Activated B cell treated with CpG ODN at 0.5 μM for 24 hours (primary cell): ENCODE measurements at regions of chr17 and their contacts with region 1.

Region 1: GRCh38 chr17:50560185-50560824 is at the start of gene CACNA1G:
- DNase-seq: peak; percentile 86
- ATAC-seq: peak; percentile 90
- H3K4me3 Mint-ChIP-seq: peak within 1 kb of the TSS; percentile 84
- H3K27ac Mint-ChIP-seq: no peak within 1 kb of the TSS
- H3K4me1 Mint-ChIP-seq: peaks cover 29% of the 10 kb centered on the region
- H3K27me3 Mint-ChIP-seq: peaks cover 37% of the 10 kb centered on the region
- CTCF ChIP-seq: no peak
- total RNA-seq, gene CACNA1G: 0.07 TPM in 1 of 2 replicates, not detected in the other

Region 2: DNA sequence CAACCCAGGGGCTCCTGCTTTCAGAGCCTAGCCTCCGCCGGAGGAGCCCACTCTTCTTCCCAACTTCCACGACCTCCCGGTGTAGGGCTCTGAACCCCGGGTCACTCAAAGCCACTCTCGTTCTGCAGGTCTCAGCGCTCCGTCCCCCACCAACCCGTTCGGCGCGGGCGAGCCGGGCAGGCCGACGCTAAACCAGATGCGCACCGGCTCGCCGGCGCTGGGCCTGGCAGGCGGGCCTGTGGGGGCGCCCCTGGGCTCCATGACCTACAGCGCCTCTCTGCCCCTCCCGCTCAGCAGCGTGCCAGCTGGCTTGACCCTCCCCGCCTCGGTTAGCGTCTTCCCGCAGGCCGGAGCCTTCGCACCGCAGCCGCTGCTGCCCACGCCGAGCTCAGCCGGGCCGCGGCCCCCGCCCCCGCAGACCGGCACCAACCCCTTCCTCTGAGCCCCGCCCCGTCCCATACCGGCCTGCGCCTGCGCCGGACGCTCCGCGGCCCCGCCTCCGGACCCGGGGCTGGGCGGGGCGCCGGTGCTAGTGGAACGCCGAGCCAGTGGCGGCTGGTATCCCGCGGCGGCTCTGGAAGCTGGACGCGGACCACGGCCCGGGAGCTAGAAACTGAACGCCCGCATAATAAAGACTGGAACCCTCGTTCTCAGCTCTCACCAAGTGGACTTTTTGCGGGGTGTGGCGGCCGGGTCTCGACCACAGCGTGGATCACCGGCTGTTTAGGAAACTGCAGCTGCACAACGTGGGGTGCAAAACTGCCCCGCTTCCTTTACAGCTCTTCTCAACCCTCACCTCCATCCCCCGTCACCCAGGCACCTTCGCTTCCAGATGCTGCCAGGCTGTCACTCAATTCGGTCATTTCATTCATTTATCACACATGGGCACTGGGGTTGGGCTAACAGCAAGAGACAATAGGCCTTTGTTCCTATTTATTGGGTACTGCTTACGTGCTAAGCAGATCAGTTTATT is 18.3 kb before region 1 on chr17:
- CTCF ChIA-PET with region 1: interaction called, 6 read pairs
- POLR2A ChIA-PET with region 1: interaction called, 4 read pairs
- intact Hi-C with region 1: loop called (anchors 1 kb)
- DNase-seq: peak; percentile 92
- ATAC-seq: peak; percentile 86
- H3K4me3 Mint-ChIP-seq: peak overlapping the region; percentile 85
- H3K27ac Mint-ChIP-seq: peak overlapping the region; percentile 76
- H3K4me1 Mint-ChIP-seq: peaks cover 17% of the 10 kb centered on the region
- H3K27me3 Mint-ChIP-seq: peaks cover 7% of the 10 kb centered on the region
- CTCF ChIP-seq: no peak

Region 3: DNA sequence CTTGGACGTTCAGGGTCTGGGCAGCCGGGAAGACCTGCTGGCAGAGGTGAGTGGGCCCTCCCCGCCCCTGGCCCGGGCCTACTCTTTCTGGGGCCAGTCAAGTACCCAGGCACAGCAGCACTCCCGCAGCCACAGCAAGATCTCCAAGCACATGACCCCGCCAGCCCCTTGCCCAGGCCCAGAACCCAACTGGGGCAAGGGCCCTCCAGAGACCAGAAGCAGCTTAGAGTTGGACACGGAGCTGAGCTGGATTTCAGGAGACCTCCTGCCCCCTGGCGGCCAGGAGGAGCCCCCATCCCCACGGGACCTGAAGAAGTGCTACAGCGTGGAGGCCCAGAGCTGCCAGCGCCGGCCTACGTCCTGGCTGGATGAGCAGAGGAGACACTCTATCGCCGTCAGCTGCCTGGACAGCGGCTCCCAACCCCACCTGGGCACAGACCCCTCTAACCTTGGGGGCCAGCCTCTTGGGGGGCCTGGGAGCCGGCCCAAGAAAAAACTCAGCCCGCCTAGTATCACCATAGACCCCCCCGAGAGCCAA is 65.8 kb after region 1 on chr17:
- CTCF ChIA-PET with region 1: no interaction called
- POLR2A ChIA-PET with region 1: no interaction called
- intact Hi-C with region 1: loop called (anchors 5 kb)
- DNase-seq: peak; percentile 47
- ATAC-seq: peak; percentile 76
- H3K4me3 Mint-ChIP-seq: no peak overlapping the region
- H3K27ac Mint-ChIP-seq: no peak overlapping the region
- H3K4me1 Mint-ChIP-seq: no peaks in the 10 kb centered on the region
- H3K27me3 Mint-ChIP-seq: peaks cover 39% of the 10 kb centered on the region
- CTCF ChIP-seq: no peak

Region 4: GRCh38 chr17:50638851-50639767 is 78.8 kb after region 1 on chr17:
- CTCF ChIA-PET with region 1: no interaction called
- POLR2A ChIA-PET with region 1: no interaction called
- intact Hi-C with region 1: no loop called
- DNase-seq: no peak
- ATAC-seq: no peak
- H3K4me3 Mint-ChIP-seq: no peak overlapping the region
- H3K27ac Mint-ChIP-seq: no peak overlapping the region
- H3K4me1 Mint-ChIP-seq: no peaks in the 10 kb centered on the region
- H3K27me3 Mint-ChIP-seq: peaks cover 39% of the 10 kb centered on the region
- CTCF ChIP-seq: no peak

Region 5: DNA sequence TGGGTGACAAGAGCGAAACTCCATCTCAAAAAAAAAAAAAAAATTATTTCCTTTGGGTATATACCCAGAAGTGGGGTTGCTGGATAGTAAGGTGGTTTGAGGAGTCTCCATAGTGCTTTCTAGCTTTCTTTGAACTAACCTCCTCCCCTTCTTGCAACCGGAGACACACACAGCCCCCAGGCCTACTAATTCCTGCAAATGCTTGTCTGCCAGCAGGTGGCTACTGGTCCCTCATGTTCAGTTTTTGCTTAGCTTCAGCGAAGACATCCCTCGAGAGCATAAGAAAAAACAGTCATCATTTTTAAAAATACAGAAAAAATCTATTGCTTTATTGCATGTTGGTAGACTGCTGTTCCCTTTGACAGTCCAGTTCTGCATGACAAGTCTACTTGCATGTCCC is 1139.0 kb after region 1 on chr17:
- CTCF ChIA-PET with region 1: no interaction called
- POLR2A ChIA-PET with region 1: no interaction called
- intact Hi-C with region 1: no loop called
- DNase-seq: no peak
- ATAC-seq: no peak
- H3K4me3 Mint-ChIP-seq: no peak overlapping the region
- H3K27ac Mint-ChIP-seq: no peak overlapping the region
- H3K4me1 Mint-ChIP-seq: no peaks in the 10 kb centered on the region
- H3K27me3 Mint-ChIP-seq: peaks cover 2% of the 10 kb centered on the region
- CTCF ChIP-seq: no peak